Activated CD4-positive, alpha-beta T cell treated with anti-CD3 and anti-CD28 coated beads, Interleukin-2, amount 10 ng/mL, durations not matched to agents 24 days and 14 days (primary cell): ENCODE measurements at regions of chr5 and their contacts with region 1.

Region 1: GRCh38 chr5:36264202-36264760 is 22.6 kb upstream of the NADK2 start:
- DNase-seq: no peak
- H3K4me3 Mint-ChIP-seq: no peak overlapping the region
- H3K27ac Mint-ChIP-seq: no peak overlapping the region
- H3K4me1 Mint-ChIP-seq: no peaks in the 10 kb centered on the region
- H3K27me3 Mint-ChIP-seq: peaks cover 20% of the 10 kb centered on the region

Region 2: GRCh38 chr5:36162810-36163486 is 101.3 kb before region 1 on chr5:
- intact Hi-C with region 1: no loop called
- DNase-seq: no peak
- H3K4me3 Mint-ChIP-seq: no peak overlapping the region
- H3K27ac Mint-ChIP-seq: no peak overlapping the region
- H3K4me1 Mint-ChIP-seq: peaks cover 25% of the 10 kb centered on the region
- H3K27me3 Mint-ChIP-seq: no peaks in the 10 kb centered on the region

Region 3: DNA sequence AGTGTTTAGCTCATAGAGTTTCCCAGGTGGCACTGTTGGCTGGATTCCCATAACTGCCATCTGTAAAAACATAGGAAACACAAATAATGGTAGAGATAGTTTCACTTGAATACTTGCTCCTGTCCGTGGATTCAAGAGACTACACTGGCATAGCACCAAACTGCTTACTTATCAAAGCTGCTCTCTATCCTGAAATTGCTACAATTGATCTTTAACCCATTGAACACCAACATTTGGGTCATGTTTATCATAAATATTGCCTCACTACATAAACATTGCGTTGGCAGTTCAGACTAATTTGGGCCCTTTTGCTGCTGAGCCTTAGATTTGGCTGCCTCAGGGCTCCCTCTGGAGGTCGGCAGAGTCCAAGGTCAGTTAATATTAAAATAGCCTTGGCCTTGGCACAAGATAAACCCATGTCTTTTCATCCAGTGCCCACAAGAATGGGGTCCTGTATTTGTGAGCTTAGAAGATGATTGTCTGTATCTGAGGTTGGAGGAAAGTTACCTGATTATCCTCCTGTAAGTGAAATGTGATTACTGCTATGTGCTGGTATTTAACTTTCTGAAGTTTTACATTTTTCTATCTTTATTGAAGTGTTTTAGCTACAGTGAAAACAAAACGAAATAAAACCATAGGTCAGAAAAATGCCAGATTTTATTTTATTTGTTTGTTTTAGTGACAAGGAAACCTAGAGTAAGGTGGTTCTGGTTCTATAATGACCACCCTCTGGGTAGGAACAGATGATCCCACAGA is 41.5 kb after region 1 on chr5:
- intact Hi-C with region 1: loop called (anchors 2 kb)
- DNase-seq: peak; percentile 65
- H3K4me3 Mint-ChIP-seq: no peak overlapping the region
- H3K27ac Mint-ChIP-seq: no peak overlapping the region
- H3K4me1 Mint-ChIP-seq: no peaks in the 10 kb centered on the region
- H3K27me3 Mint-ChIP-seq: peaks cover 17% of the 10 kb centered on the region

Region 4: GRCh38 chr5:36397901-36398536 is 133.7 kb after region 1 on chr5:
- intact Hi-C with region 1: loop called (anchors 10 kb)
- DNase-seq: no peak
- H3K4me3 Mint-ChIP-seq: no peak overlapping the region
- H3K27ac Mint-ChIP-seq: no peak overlapping the region
- H3K4me1 Mint-ChIP-seq: no peaks in the 10 kb centered on the region
- H3K27me3 Mint-ChIP-seq: peaks cover 7% of the 10 kb centered on the region

Region 5: GRCh38 chr5:36507332-36507952 is 243.2 kb after region 1 on chr5:
- intact Hi-C with region 1: loop called (anchors 1 kb)
- DNase-seq: peak; percentile 91
- H3K4me3 Mint-ChIP-seq: no peak overlapping the region
- H3K27ac Mint-ChIP-seq: no peak overlapping the region
- H3K4me1 Mint-ChIP-seq: peaks cover 2% of the 10 kb centered on the region
- H3K27me3 Mint-ChIP-seq: peaks cover 10% of the 10 kb centered on the region

Region 6: DNA sequence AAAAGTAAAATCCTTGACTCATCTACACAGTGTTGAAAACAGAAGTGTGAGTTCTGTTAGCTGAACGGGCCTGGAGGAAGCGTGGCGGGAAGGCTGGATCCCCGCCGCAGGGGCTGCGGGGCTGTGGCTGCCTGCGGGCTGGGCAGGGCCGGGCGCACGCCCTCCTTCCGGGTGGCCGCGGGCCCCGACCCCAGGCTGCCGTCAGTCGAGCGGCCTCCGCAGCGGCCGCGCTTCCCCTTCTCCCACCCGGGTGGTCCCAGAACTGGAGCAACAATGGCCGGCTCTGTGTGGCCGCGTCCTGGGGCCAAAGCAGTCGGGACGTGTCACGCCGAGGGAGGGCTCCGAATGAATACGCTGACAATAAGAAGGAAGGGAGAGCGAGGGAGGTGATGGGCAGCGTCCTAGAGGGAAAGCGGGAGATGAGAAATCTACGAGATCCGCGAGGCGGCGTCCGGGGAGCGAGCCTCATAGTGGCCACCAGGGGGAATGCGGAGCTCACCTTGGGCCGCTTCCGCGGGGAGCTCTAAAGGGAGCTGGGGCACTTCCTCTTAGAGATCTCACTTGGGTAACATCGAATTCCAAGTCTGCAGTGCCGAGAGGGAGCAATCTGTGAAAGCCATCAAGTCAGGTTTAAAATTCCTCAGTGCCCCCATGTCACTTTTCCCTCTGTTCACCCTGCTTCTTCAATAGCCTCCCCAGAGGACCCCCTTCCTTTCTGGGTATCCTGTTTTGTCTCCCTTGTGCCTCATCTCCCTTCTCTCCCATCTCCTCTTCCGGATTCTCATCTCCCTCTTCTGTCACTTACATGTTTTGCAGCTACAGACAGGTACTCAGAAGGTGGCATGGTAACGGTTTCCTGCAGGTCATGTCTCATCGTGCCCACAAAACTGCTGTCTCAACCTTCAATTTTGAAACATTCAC is 426.0 kb after region 1 on chr5:
- intact Hi-C with region 1: loop called (anchors 1 kb)
- DNase-seq: peak; percentile 87
- H3K4me3 Mint-ChIP-seq: peak overlapping the region; percentile 87
- H3K27ac Mint-ChIP-seq: peak overlapping the region; percentile 56
- H3K4me1 Mint-ChIP-seq: peaks cover 11% of the 10 kb centered on the region
- H3K27me3 Mint-ChIP-seq: peaks cover 31% of the 10 kb centered on the region

Region 7: GRCh38 chr5:36934740-36935356 is 670.6 kb after region 1 on chr5:
- intact Hi-C with region 1: no loop called
- DNase-seq: no peak
- H3K4me3 Mint-ChIP-seq: no peak overlapping the region
- H3K27ac Mint-ChIP-seq: no peak overlapping the region
- H3K4me1 Mint-ChIP-seq: peaks cover 11% of the 10 kb centered on the region
- H3K27me3 Mint-ChIP-seq: no peaks in the 10 kb centered on the region